Spleen (tissue), 13 donors: ENCODE measurements at regions of chr10 and their contacts with region 1.

Region 1: DNA sequence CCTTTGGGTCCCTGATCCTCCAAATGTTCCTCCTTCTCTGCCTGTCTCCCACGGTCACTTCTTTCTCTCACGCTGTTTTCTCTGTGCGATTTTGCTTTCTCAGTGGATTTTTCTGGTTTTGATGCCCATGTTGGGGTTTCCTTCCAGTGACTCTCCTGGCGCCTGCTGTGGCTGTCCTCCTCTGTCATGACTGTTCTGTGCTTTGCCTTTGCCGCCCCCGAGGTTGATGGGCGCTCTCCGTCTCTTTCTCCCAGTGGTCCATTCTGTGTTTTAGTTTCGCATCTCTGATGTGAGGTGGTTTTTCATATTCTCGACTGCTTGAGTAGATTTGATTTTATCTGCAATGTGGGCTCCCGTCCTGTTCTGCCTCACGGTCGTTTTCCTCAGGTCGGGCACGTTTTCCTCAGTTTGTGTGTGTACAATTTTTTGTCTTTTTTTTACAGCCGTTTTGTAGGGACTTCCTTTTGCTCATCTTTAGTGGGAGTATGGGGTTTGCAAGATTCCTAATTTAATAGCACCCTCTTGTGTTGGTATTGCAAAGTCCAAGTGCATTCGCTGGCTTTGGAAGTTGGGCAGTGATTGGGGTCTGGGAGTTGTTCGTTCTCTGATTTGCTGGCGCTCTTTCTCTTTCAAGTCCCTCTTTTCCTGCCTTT is 100.0 kb downstream of the INPP5A start:
- DNase-seq: peak; percentile 61
- H3K4me3 ChIP-seq: no peak overlapping the region
- H3K27ac ChIP-seq: no peak overlapping the region
- H3K4me1 ChIP-seq: peaks cover 23 to 49% (median 35%) of the 10 kb centered on the region in 6 donors
- H3K27me3 ChIP-seq: no peaks in the 10 kb centered on the region
- CTCF ChIP-seq: peak; percentile 68 to 94 (median 84)
- POLR2A ChIP-seq: no peak

Region 2: GRCh38 chr10:132387764-132388210 is 249.8 kb before region 1 on chr10:
- intact Hi-C with region 1: loop called (anchors 5 kb)
- DNase-seq: peak; percentile 96
- H3K4me3 ChIP-seq: peak overlapping the region in 1 of 8 donors; percentile 51
- H3K27ac ChIP-seq: peak overlapping the region in 7 of 8 donors; percentile 54 to 77 (median 72)
- H3K4me1 ChIP-seq: peaks cover 14 to 64% (median 42%) of the 10 kb centered on the region in 6 donors
- H3K27me3 ChIP-seq: no peaks in the 10 kb centered on the region
- CTCF ChIP-seq: peak; percentile 77 to 93 (median 84)
- POLR2A ChIP-seq: no peak

Region 3: GRCh38 chr10:132458593-132459300 is 178.9 kb before region 1 on chr10:
- intact Hi-C with region 1: loop called (anchors 2 kb)
- DNase-seq: peak; percentile 93
- H3K4me3 ChIP-seq: no peak overlapping the region
- H3K27ac ChIP-seq: no peak overlapping the region
- H3K4me1 ChIP-seq: peaks cover 0 to 21% (median 7%) of the 10 kb centered on the region in 6 donors
- H3K27me3 ChIP-seq: peaks cover 0 to 10% (median 0%) of the 10 kb centered on the region in 7 donors
- CTCF ChIP-seq: peak; percentile 91 to 99 (median 96)
- POLR2A ChIP-seq: no peak

Region 4: GRCh38 chr10:132536971-132537712 is 100.5 kb before region 1 on chr10:
- intact Hi-C with region 1: loop called (anchors 10 kb)
- DNase-seq: peak; percentile 100
- H3K4me3 ChIP-seq: peak overlapping the region; percentile 50 to 89 (median 60)
- H3K27ac ChIP-seq: peak overlapping the region; percentile 73 to 96 (median 88)
- H3K4me1 ChIP-seq: peaks cover 41 to 76% (median 61%) of the 10 kb centered on the region in 6 donors
- H3K27me3 ChIP-seq: no peaks in the 10 kb centered on the region
- CTCF ChIP-seq: peak in 8 of 11 experiments; percentile 11 to 66 (median 48)
- POLR2A ChIP-seq: peak in 1 of 3 donors; percentile 16